HEK293 (cell line): ENCODE measurements at regions of chr6 and their contacts with region 1.

Region 1: DNA sequence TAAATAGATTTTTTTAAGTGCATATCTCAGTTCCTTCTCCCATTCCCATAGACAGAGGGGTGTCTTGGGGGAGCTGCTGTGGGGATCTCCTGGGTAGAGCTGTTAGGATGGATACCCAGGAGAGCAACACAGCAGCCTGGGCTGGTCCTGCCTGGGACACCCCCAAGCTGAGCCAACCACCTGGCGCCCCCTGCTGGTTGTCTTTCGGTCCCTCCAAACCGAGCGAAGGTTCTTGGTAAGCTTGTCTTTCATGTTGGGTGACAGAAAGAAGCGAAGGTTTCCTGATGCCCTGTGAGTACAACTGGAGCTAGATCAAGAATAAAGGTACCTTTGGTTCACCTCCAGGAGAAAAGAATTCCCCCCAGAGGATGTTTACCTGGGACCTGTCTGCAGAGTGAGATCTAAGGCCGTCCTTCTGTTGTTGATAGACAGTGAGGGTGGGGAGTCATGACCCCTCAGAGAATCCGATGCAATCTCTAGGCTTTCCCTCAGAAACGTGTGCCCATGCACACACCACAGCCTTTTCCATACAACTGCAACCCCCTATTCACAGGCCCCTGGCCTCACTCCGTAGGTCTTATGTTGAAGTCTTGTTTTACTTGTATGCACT is 50.8 kb downstream of the SNX9 start:
- H3K4me3 ChIP-seq: no peak overlapping the region
- H3K27ac ChIP-seq: no peak overlapping the region
- H3K4me1 ChIP-seq: no peaks in the 10 kb centered on the region
- CTCF ChIP-seq: peak; percentile 72

Region 2: DNA sequence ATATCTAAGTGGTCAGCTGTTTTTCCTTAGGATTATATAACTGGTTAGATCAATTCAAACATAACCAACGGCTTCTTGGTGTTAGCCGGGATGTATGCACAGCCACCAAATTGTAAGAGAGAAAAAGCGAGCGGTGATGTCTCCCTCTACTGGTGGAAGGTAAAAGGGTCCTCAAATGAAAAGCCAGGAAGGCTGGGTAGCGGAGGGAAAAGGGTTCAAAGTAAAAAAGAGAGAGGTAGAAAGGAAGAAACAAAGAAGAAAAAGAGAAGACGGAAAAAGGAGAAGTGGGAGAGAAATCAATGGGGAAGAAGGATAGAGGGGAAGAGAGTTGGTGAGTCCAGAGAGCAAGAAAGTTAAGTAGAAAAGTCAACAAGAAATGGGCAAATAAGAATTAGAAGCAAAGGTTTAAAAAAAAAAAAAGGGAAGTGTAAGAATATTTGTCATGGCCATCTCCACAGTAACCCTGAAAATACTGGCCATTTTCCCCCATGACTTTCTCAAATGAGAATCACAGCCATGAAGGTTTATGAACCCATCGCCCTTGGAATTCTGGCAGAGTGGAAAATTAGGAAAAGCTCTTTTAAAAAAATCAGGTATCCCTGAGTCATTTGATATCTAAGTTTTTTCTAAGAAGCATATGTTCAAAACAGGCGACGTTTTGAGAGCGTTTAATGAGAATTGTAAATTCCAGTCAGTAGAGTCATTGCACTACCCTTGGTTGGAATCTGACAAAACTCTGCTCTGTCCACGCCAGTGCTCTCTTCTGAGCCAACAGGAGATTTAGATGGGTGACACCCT is 206.4 kb before region 1 on chr6:
- CTCF ChIA-PET with region 1: interaction called, 22 read pairs
- POLR2A ChIA-PET with region 1: no interaction called
- H3K4me3 ChIP-seq: no peak overlapping the region
- H3K27ac ChIP-seq: no peak overlapping the region
- H3K4me1 ChIP-seq: peaks cover 3% of the 10 kb centered on the region
- CTCF ChIP-seq: peak; percentile 86

Region 3: DNA sequence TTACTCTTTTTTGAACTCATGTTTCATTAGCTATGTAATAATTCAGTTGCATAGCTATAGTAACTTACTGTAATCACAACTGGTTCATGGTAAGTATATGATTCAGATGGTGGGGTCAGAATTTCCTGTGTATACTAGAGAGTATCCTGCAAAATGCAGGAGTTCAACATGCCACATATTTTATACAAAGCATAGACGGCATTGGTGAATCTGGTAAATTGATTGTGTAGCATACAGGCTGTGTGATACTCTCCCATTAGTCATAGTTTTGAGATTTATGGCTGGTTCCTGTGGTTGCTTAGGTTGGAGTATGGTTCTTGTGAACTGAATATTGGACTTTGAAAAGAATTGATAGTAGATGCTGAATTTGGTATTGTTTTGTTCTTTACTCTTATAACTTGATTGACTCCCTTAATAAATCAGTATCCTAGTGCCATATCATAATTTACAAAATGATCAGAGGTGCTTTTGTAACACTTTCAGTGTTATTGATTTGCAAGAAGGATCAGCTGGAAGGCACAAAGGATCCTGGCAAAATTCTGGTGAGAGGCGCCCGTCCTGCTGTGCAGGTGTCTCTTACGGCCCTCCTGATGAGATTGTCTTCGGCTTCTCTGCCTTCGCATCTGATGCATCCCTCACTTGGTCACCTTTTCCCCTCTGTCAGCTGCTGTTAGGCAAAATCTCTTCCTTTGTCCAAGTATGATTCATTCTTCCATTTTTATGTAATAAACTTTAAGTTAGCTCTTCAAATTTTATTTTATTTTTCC is 28.2 kb before region 1 on chr6:
- CTCF ChIA-PET with region 1: interaction called, 10 read pairs
- POLR2A ChIA-PET with region 1: no interaction called
- H3K4me3 ChIP-seq: no peak overlapping the region
- H3K27ac ChIP-seq: no peak overlapping the region
- H3K4me1 ChIP-seq: peaks cover 18% of the 10 kb centered on the region
- CTCF ChIP-seq: no peak

Region 4: DNA sequence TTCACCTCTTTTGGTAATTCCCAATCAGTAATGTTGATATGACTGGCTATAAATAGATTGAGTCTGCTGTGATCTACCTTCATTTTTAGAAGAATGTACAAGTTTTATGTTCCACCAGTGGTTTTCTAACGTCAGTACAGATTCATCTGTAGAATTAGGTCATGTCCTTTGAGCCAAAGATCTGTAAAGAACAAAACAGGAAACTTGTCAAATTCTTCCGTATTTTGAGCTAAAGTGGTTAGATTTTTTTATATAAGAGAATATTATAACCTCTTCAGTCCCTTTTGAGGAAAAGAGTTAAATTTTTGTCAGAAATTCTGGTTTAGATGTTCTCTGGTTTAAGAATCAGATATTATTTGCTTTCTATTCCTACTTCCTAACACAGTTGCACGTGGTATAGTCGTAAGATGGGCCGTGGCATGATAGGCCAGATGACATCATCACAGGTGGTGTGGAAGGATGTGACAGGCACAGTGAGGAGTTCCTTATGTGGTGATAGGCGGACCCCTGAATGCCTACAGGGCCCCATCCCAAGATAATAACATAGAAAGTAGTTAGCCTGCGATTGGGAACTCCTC is 11.5 kb after region 1 on chr6:
- CTCF ChIA-PET with region 1: interaction called, 24 read pairs
- POLR2A ChIA-PET with region 1: interaction called, 3 read pairs
- H3K4me3 ChIP-seq: no peak overlapping the region
- H3K27ac ChIP-seq: no peak overlapping the region
- H3K4me1 ChIP-seq: no peaks in the 10 kb centered on the region
- CTCF ChIP-seq: no peak

Region 5: GRCh38 chr6:158072083-158072721 is 198.4 kb after region 1 on chr6:
- CTCF ChIA-PET with region 1: interaction called, 20 read pairs
- POLR2A ChIA-PET with region 1: no interaction called
- H3K4me3 ChIP-seq: no peak overlapping the region
- H3K27ac ChIP-seq: no peak overlapping the region
- H3K4me1 ChIP-seq: no peaks in the 10 kb centered on the region
- CTCF ChIP-seq: peak; percentile 64; the same call in 1 of the 2 replicates

Region 6: GRCh38 chr6:158270389-158271127 is 396.7 kb after region 1 on chr6:
- CTCF ChIA-PET with region 1: no interaction called
- POLR2A ChIA-PET with region 1: no interaction called
- H3K4me3 ChIP-seq: no peak overlapping the region
- H3K27ac ChIP-seq: no peak overlapping the region
- H3K4me1 ChIP-seq: peaks cover 3% of the 10 kb centered on the region; the same call in 1 of the 2 replicates
- CTCF ChIP-seq: no peak